ENCODE measurements at regions of chr1 and their contacts with region 1.

Region 1: GRCh38 chr1:114145504-114146151 is 8.0 kb downstream of the SYT6 start:
- DNase-seq: no peak
- H3K4me3 ChIP-seq: no peak overlapping the region
- H3K27ac ChIP-seq: no peak overlapping the region
- H3K4me1 ChIP-seq: no peaks in the 10 kb centered on the region
- H3K27me3 ChIP-seq: peaks cover 13 to 25% of the 10 kb centered on the region in 2 experiments
- CTCF ChIP-seq: no peak
- POLR2A ChIP-seq: no peak

Region 2: DNA sequence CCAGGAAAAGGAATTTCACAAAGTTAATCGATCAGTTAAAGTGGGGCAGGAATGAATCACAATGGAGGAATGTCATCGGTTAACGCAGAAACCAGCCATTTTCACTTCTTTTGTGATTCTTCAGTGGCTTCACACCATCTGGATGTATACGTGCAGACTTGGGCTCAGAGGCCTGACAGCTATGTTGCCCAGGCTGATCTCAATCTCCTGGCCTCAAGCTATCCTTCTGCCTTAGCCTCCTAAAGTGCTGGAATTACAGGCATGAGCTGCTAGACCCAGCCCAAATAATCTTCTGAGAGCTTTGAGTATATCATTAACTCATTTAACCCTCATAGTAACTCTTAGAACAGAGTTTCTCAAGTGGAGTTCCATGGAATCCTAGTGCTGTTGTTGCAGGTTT is 1369.6 kb after region 1 on chr1:
- CTCF ChIA-PET with region 1: no interaction called
- POLR2A ChIA-PET with region 1: no interaction called
- dilution Hi-C with region 1: no loop called
- intact Hi-C with region 1: loop called (anchors 5 kb)
- DNase-seq: no peak
- H3K4me3 ChIP-seq: no peak overlapping the region
- H3K27ac ChIP-seq: no peak overlapping the region
- H3K4me1 ChIP-seq: no peaks in the 10 kb centered on the region
- H3K27me3 ChIP-seq: no peaks in the 10 kb centered on the region
- CTCF ChIP-seq: no peak
- POLR2A ChIP-seq: no peak

Measured in endothelial cell of umbilical vein (primary cell).